Heart right ventricle (tissue), 16 donors: ENCODE measurements at regions of chrX and their contacts with region 1.

Region 1: GRCh38 chrX:133834771-133835170 is 150.6 kb downstream of the GPC3 start:
- DNase-seq: no peak
- ATAC-seq: no peak
- H3K4me3 ChIP-seq: no peak overlapping the region
- H3K27ac ChIP-seq: no peak overlapping the region
- H3K4me1 ChIP-seq: no peaks in the 10 kb centered on the region
- H3K27me3 ChIP-seq: peaks cover 0 to 24% (median 0%) of the 10 kb centered on the region in 7 donors
- CTCF ChIP-seq: no peak

Region 2: DNA sequence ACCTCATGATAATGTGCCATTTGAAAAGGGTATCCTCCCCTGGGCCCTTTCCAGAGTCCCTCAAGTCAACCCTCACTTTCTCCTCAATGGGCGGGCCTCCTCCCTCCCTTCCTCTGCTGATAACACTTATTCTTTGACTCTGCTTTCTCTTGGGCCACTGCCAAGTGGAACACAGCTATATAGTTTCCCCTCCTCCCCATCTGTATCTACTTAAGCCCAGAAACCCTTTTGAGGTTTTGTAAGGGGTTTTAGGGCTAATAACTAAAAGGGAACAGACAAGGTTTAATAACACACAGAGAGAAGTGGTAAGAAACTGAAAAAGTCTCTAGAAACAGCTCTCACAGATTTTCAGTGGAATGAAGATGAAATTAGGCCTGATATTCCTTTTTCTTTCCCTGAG is 33.9 kb after region 1 on chrX:
- intact Hi-C with region 1: loop called in 1 of 10 experiments (anchors 1 kb)
- DNase-seq: no peak
- ATAC-seq: no peak
- H3K4me3 ChIP-seq: no peak overlapping the region
- H3K27ac ChIP-seq: no peak overlapping the region
- H3K4me1 ChIP-seq: no peaks in the 10 kb centered on the region
- H3K27me3 ChIP-seq: no peaks in the 10 kb centered on the region
- CTCF ChIP-seq: no peak